ENCODE measurements at regions of chr19 and their contacts with region 1.

Region 1: DNA sequence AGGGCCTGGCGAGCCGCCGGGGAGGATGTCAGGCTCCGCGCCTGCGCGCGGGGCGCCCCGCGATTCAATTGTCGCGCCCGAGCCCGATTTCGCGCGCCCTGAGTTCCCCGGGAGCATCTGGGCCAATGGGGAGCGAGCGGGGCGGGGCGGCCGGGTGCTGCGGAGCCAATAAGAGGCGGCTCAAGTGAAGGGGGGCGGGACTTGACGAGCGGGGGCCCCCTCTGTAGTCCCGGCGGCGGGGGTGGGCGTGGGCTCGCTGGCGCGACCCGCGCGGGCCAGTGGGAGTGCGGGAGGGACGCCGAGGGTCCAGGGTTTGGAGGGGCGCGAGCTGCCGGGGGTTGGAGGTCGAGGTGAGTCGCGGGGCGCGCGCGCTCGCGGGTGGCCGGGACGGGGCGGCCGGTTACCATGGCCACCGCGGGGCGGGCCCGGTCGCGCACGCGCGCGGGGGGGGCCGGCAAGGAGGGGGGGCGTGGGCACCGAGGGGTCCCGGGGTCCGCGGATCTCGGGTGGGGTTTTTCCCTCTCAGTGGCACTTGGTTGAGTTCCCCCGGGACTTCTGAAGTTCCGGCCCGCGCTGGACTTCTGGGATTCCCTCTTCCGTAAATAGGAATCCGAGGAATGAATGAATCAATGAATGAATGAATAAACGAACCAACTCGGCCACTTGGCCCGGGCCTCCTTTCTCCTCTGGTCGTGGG is 744 bp downstream of the UHRF1 start:
- DNase-seq: peak; percentile 87
- H3K4me3 ChIP-seq: peak overlapping the region; percentile 71 to 77 (median 74)
- H3K27ac ChIP-seq: peak overlapping the region; percentile 58
- H3K4me1 ChIP-seq: peaks cover 26% of the 10 kb centered on the region
- H3K27me3 ChIP-seq: no peaks in the 10 kb centered on the region
- CTCF ChIP-seq: no peak
- POLR2A ChIP-seq: no peak

Region 2: GRCh38 chr19:4505897-4506744 is 403.9 kb before region 1 on chr19:
- CTCF ChIA-PET with region 1: no interaction called
- POLR2A ChIA-PET with region 1: no interaction called
- dilution Hi-C with region 1: no loop called
- intact Hi-C with region 1: no loop called
- DNase-seq: peak; percentile 69
- H3K4me3 ChIP-seq: no peak overlapping the region
- H3K27ac ChIP-seq: peak overlapping the region; percentile 7
- H3K4me1 ChIP-seq: peaks cover 10% of the 10 kb centered on the region
- H3K27me3 ChIP-seq: no peaks in the 10 kb centered on the region
- CTCF ChIP-seq: no peak
- POLR2A ChIP-seq: no peak

Region 3: GRCh38 chr19:4791170-4792018 is 118.7 kb before region 1 on chr19 and contains the start of gene FEM1A:
- CTCF ChIA-PET with region 1: interaction called, 10 read pairs
- POLR2A ChIA-PET with region 1: no interaction called
- dilution Hi-C with region 1: no loop called
- intact Hi-C with region 1: no loop called
- DNase-seq: peak; percentile 100
- H3K4me3 ChIP-seq: peak within 1 kb of the TSS; percentile 25 to 88 (median 45)
- H3K27ac ChIP-seq: peak within 1 kb of the TSS; percentile 69
- H3K4me1 ChIP-seq: peaks cover 8% of the 10 kb centered on the region
- H3K27me3 ChIP-seq: no peaks in the 10 kb centered on the region
- CTCF ChIP-seq: peak; percentile 98 to 100
- POLR2A ChIP-seq: peak; percentile 72
- total RNA-seq, gene FEM1A: 11.4 TPM in 2 replicates

Region 4: GRCh38 chr19:4851551-4852290 is 58.3 kb before region 1 on chr19:
- CTCF ChIA-PET with region 1: interaction called, 46 read pairs
- POLR2A ChIA-PET with region 1: no interaction called
- dilution Hi-C with region 1: no loop called
- intact Hi-C with region 1: no loop called
- DNase-seq: peak; percentile 53
- H3K4me3 ChIP-seq: no peak overlapping the region
- H3K27ac ChIP-seq: no peak overlapping the region
- H3K4me1 ChIP-seq: no peaks in the 10 kb centered on the region
- H3K27me3 ChIP-seq: no peaks in the 10 kb centered on the region
- CTCF ChIP-seq: peak; percentile 78 to 90
- POLR2A ChIP-seq: no peak

Region 5: GRCh38 chr19:4968462-4969291 is 58.6 kb after region 1 on chr19 and contains the start of gene KDM4B:
- CTCF ChIA-PET with region 1: interaction called, 5 read pairs
- POLR2A ChIA-PET with region 1: interaction called, 7 read pairs
- dilution Hi-C with region 1: no loop called
- intact Hi-C with region 1: loop called (anchors 1 kb)
- DNase-seq: peak; percentile 100
- H3K4me3 ChIP-seq: peak within 1 kb of the TSS; percentile 45 to 54 (median 48)
- H3K27ac ChIP-seq: no peak within 1 kb of the TSS
- H3K4me1 ChIP-seq: peaks cover 23% of the 10 kb centered on the region
- H3K27me3 ChIP-seq: no peaks in the 10 kb centered on the region
- CTCF ChIP-seq: no peak
- POLR2A ChIP-seq: peak; percentile 85
- total RNA-seq, gene KDM4B: 30.8 and 37.2 TPM in 2 replicates

Measured in endothelial cell of umbilical vein (primary cell).